Naive thymus-derived CD4-positive, alpha-beta T cell (primary cell): ENCODE measurements at regions of chr7 and their contacts with region 1.

Region 1: DNA sequence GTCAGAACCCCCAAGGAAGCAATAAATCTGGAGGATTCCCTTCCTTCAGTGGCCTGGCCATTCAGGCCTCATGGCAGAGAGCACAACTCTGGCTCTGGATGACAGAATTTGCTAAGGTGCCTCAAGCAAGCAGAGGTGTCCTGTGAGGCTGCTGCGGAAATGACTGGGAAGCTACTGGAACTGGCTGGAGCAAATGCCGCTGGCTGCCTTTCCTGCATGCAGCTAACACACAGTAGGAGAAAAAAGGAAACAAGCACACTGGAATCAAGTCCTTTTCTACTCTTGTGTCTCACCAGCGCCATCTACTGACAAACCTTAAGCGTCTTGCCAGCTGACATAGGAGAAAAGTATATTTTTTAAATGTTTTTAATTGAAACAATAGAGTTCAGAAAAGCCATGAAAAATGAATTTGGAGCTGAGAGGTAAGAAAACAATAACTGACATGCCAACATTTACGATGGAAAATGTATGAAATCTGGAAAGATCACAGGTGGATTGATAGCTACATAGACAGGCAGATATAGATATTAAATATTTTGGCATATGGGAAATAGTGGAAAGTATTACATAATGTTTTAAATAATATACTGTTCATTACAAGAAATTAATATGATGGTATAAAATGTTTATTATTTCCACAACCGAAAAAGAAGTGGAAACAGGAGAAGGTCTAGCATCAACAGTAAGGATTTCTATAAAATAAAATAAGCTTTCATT is 951.6 kb downstream of the ANKRD7 start:
- DNase-seq: no peak
- ATAC-seq: no peak
- H3K4me3 ChIP-seq: no peak overlapping the region
- H3K4me3 Mint-ChIP-seq: no peak overlapping the region
- H3K27ac ChIP-seq: no peak overlapping the region
- H3K27ac Mint-ChIP-seq: no peak overlapping the region
- H3K4me1 ChIP-seq: no peaks in the 10 kb centered on the region
- H3K4me1 Mint-ChIP-seq: no peaks in the 10 kb centered on the region
- H3K27me3 ChIP-seq: no peaks in the 10 kb centered on the region
- H3K27me3 Mint-ChIP-seq: no peaks in the 10 kb centered on the region

Region 2: DNA sequence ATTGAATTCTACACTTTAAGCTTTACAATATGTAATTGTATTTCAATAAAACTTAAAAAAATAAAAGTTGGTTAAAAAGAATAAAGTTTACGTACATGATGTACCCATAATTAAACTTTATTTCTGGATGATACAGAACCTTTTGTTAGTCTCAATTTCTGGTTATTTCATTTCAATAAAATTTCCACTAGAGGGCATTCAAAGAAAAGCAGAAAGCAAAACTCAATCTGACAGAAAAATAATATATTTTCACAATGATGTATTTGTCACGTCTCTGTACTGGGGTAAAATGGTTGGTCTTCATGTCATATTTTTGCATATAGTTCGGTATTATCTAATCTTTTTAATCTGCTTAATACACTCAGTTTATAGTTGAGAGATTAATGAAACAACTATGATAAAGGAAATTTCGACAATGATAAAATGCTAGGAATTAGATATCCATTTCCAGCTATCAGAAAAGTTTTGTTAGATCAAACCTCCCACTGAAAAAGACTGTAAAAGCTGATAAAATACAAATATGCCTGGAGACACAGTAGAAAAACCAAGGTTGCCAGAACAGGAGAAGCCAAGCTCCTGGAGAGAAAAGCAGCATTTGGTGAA is 1776.1 kb before region 1 on chr7:
- CTCF ChIA-PET with region 1: no interaction called
- POLR2A ChIA-PET with region 1: no interaction called
- intact Hi-C with region 1: loop called in 1 of 2 experiments (anchors 5 kb)
- DNase-seq: no peak
- ATAC-seq: no peak
- H3K4me3 ChIP-seq: no peak overlapping the region
- H3K4me3 Mint-ChIP-seq: no peak overlapping the region
- H3K27ac ChIP-seq: no peak overlapping the region
- H3K27ac Mint-ChIP-seq: no peak overlapping the region
- H3K4me1 ChIP-seq: no peaks in the 10 kb centered on the region
- H3K4me1 Mint-ChIP-seq: no peaks in the 10 kb centered on the region
- H3K27me3 ChIP-seq: no peaks in the 10 kb centered on the region
- H3K27me3 Mint-ChIP-seq: no peaks in the 10 kb centered on the region

Region 3: GRCh38 chr7:118259115-118259514 is 917.0 kb before region 1 on chr7:
- CTCF ChIA-PET with region 1: no interaction called
- POLR2A ChIA-PET with region 1: no interaction called
- intact Hi-C with region 1: loop called in 1 of 2 experiments (anchors 1 kb)
- DNase-seq: peak in 1 of 9 donors; percentile 1
- ATAC-seq: no peak
- H3K4me3 ChIP-seq: no peak overlapping the region
- H3K4me3 Mint-ChIP-seq: no peak overlapping the region
- H3K27ac ChIP-seq: no peak overlapping the region
- H3K27ac Mint-ChIP-seq: no peak overlapping the region
- H3K4me1 ChIP-seq: no peaks in the 10 kb centered on the region
- H3K4me1 Mint-ChIP-seq: no peaks in the 10 kb centered on the region
- H3K27me3 ChIP-seq: no peaks in the 10 kb centered on the region
- H3K27me3 Mint-ChIP-seq: peaks cover 4 to 22% (median 15%) of the 10 kb centered on the region in 5 donors

Region 4: DNA sequence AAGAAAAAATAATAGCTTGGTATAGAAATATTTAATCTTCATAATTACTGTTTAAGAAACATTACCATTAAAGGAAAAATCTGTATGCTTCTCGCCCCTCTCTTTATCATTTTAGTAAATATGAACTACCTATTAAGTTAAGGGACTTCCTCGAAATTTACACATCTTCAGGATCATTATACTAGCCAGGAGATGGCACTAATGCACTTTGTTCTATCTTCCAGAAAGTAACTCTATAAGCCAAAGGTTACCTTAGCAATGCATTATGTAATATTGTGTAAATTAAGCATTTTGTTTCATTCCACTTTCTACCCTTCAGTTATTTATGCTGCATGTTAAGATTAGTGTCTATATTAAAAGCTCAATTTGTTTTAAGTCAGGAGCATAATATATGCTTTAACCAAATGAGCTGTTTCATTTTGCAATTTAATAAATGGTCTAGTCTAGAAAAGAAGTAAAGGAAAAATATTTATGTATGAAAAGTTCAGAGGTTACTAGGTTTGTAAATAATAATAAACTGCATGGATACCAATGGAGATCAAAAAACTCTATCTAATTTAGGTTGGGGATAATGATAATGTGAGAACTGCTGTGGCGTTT is 823.1 kb before region 1 on chr7:
- CTCF ChIA-PET with region 1: no interaction called
- POLR2A ChIA-PET with region 1: no interaction called
- intact Hi-C with region 1: loop called in 1 of 2 experiments (anchors 10 kb)
- DNase-seq: no peak
- ATAC-seq: no peak
- H3K4me3 ChIP-seq: no peak overlapping the region
- H3K4me3 Mint-ChIP-seq: no peak overlapping the region
- H3K27ac ChIP-seq: no peak overlapping the region
- H3K27ac Mint-ChIP-seq: no peak overlapping the region
- H3K4me1 ChIP-seq: no peaks in the 10 kb centered on the region
- H3K4me1 Mint-ChIP-seq: peaks cover 0 to 2% (median 0%) of the 10 kb centered on the region in 7 donors
- H3K27me3 ChIP-seq: no peaks in the 10 kb centered on the region
- H3K27me3 Mint-ChIP-seq: peaks cover 0 to 6% (median 0%) of the 10 kb centered on the region in 5 donors

Region 5: DNA sequence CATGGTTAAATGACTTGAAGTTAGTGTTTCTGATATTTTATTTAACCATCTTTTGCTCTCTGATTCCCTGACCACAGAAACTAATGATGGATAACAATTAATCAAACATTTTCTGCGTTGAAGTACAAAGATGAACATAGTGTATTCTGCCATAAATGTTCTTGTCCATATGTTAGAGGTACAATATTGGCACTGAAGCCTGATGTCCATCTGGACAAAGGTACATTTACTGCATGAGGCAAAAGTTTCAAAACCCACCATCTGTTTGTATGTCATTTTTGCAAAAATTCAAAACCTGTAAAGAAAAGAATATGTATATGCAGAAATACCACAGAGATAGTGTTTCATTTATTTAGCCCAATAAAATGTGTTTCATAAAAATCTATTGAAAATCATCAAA is 90.0 kb before region 1 on chr7:
- CTCF ChIA-PET with region 1: no interaction called
- POLR2A ChIA-PET with region 1: no interaction called
- intact Hi-C with region 1: no loop called
- DNase-seq: no peak
- ATAC-seq: no peak
- H3K4me3 ChIP-seq: no peak overlapping the region
- H3K4me3 Mint-ChIP-seq: no peak overlapping the region
- H3K27ac ChIP-seq: no peak overlapping the region
- H3K27ac Mint-ChIP-seq: no peak overlapping the region
- H3K4me1 ChIP-seq: no peaks in the 10 kb centered on the region
- H3K4me1 Mint-ChIP-seq: no peaks in the 10 kb centered on the region
- H3K27me3 ChIP-seq: no peaks in the 10 kb centered on the region
- H3K27me3 Mint-ChIP-seq: no peaks in the 10 kb centered on the region

Region 6: DNA sequence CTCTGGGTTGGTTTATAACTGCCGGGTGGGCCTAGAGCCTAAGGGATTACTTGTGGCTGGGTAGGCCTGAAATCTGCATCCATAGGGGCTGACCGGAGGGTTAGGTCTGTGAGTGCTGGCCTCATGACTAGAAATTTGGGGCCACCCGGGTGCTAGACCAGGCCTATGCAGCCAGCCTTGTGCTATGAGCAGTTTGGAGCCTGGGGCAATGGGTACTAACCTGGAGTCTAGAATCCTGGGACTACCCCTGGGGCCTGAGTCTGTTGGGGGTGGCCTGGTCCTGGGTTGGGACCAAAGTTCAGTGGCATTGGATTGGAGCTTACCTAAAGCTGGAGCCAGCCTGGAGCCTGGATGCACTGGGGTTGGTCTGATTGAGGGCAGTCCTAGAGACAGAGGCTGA is 43.6 kb after region 1 on chr7:
- CTCF ChIA-PET with region 1: no interaction called
- POLR2A ChIA-PET with region 1: no interaction called
- intact Hi-C with region 1: no loop called
- DNase-seq: no peak
- ATAC-seq: peak; percentile 16
- H3K4me3 ChIP-seq: no peak overlapping the region
- H3K4me3 Mint-ChIP-seq: no peak overlapping the region
- H3K27ac ChIP-seq: no peak overlapping the region
- H3K27ac Mint-ChIP-seq: no peak overlapping the region
- H3K4me1 ChIP-seq: no peaks in the 10 kb centered on the region
- H3K4me1 Mint-ChIP-seq: no peaks in the 10 kb centered on the region
- H3K27me3 ChIP-seq: no peaks in the 10 kb centered on the region
- H3K27me3 Mint-ChIP-seq: no peaks in the 10 kb centered on the region

Region 7: DNA sequence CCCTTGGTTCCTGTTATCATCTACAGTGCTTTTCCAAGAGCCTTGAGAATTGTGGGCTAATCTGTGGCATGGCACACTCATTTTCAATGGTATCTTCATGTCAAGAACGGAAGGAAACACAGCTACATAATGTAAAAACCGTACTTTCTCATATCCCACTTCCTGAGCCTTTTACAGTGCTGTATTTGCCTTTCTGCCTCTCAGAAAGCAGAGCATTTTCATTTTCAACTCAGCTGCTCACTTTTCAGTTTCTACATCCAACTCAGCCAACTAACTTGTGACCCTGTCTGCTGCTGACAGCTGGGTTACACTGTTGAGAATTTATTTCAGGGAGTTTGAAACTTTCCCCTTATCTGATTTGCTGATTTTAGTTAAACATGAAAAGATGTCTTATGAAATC is 221.1 kb after region 1 on chr7:
- CTCF ChIA-PET with region 1: no interaction called
- POLR2A ChIA-PET with region 1: no interaction called
- intact Hi-C with region 1: no loop called
- DNase-seq: no peak
- ATAC-seq: no peak
- H3K4me3 ChIP-seq: no peak overlapping the region
- H3K4me3 Mint-ChIP-seq: no peak overlapping the region
- H3K27ac ChIP-seq: no peak overlapping the region
- H3K27ac Mint-ChIP-seq: no peak overlapping the region
- H3K4me1 ChIP-seq: no peaks in the 10 kb centered on the region
- H3K4me1 Mint-ChIP-seq: no peaks in the 10 kb centered on the region
- H3K27me3 ChIP-seq: no peaks in the 10 kb centered on the region
- H3K27me3 Mint-ChIP-seq: no peaks in the 10 kb centered on the region